A673 (cell line): ENCODE measurements at regions of chr2 and their contacts with region 1.

Region 1: DNA sequence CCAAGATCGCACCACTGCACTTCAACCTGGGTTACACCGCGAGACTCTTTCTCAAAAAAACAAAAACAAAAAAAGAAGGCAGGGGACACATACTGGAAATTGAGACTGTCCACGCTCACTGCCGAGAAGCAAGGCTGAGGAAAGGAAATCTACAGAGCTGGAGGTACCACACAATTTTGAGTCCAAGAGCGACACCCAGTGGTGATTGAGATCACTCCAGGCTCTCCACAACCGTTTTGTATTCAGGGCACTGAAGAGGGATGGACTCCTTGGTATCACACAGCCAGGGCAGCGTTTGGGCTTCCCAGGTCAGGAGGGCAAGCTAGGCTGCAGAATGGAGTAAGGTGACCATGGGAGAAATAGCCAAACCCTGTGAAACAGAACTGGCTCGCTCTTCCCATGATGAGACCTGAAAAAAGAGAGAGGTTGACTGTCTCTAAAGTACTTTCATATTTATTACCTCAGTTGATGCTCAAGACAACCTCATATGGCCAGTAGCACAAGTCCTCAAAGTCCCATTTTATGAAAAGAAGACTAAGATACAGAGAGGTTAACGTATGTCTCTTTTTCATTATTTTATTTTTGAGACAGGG is 74.5 kb upstream of the YPEL5 start:
- DNase-seq: peak; percentile 91
- H3K4me3 ChIP-seq: no peak overlapping the region
- H3K27ac ChIP-seq: no peak overlapping the region
- H3K4me1 ChIP-seq: no peaks in the 10 kb centered on the region
- H3K27me3 ChIP-seq: no peaks in the 10 kb centered on the region
- CTCF ChIP-seq: peak; percentile 85

Region 2: DNA sequence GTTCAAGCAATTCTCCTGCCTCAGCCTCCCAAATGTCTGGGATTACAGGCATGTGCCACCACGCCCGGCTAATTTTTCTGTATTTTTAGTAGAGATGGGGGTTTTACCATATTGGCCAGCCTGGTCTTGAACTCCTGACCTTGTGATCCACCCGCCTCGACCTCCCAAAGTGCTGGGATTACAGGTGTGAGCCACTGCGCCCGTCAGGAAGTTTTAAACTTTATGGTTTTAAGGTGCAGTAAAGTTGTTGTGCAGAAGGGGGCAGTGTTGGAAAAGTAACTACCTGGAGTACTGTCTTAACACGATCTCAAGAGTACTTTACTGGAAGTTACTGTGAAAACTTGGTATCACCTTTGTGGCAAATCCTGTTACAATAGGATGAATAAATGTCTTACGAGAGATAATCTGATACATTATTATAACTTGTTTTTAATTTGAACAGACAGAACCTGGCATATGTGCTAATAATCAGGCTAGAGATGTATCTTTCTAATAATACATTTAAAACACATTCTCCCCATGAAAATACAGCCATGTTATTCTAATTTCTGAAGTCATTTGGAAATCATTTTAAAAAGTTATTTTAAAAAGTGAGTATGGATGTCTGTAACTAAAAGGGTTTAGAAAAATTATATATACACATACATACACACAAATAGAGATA is 1250.9 kb before region 1 on chr2:
- CTCF ChIA-PET with region 1: no interaction called
- POLR2A ChIA-PET with region 1: no interaction called
- intact Hi-C with region 1: loop called (anchors 10 kb)
- DNase-seq: peak; percentile 70
- H3K4me3 ChIP-seq: no peak overlapping the region
- H3K27ac ChIP-seq: no peak overlapping the region
- H3K4me1 ChIP-seq: no peaks in the 10 kb centered on the region
- H3K27me3 ChIP-seq: no peaks in the 10 kb centered on the region
- CTCF ChIP-seq: peak; percentile 73

Region 3: GRCh38 chr2:29309090-29310029 is 763.0 kb before region 1 on chr2:
- CTCF ChIA-PET with region 1: interaction called, 3 read pairs
- POLR2A ChIA-PET with region 1: no interaction called
- intact Hi-C with region 1: loop called (anchors 10 kb)
- DNase-seq: peak; percentile 89
- H3K4me3 ChIP-seq: no peak overlapping the region
- H3K27ac ChIP-seq: no peak overlapping the region
- H3K4me1 ChIP-seq: peaks cover 21% of the 10 kb centered on the region
- H3K27me3 ChIP-seq: no peaks in the 10 kb centered on the region
- CTCF ChIP-seq: peak; percentile 89

Region 4: GRCh38 chr2:29841386-29842004 is 230.9 kb before region 1 on chr2:
- CTCF ChIA-PET with region 1: no interaction called
- POLR2A ChIA-PET with region 1: no interaction called
- intact Hi-C with region 1: loop called (anchors 5 kb)
- DNase-seq: peak; percentile 71
- H3K4me3 ChIP-seq: no peak overlapping the region
- H3K27ac ChIP-seq: no peak overlapping the region
- H3K4me1 ChIP-seq: no peaks in the 10 kb centered on the region
- H3K27me3 ChIP-seq: no peaks in the 10 kb centered on the region
- CTCF ChIP-seq: peak; percentile 93

Region 5: GRCh38 chr2:29923110-29923721 is 149.1 kb before region 1 on chr2:
- CTCF ChIA-PET with region 1: interaction called, 8 read pairs
- POLR2A ChIA-PET with region 1: no interaction called
- intact Hi-C with region 1: loop called (anchors 2 kb)
- DNase-seq: peak; percentile 86
- H3K4me3 ChIP-seq: no peak overlapping the region
- H3K27ac ChIP-seq: no peak overlapping the region
- H3K4me1 ChIP-seq: peaks cover 10% of the 10 kb centered on the region
- H3K27me3 ChIP-seq: no peaks in the 10 kb centered on the region
- CTCF ChIP-seq: peak; percentile 98